Calu3 (cell line): ENCODE measurements at regions of chr6 and their contacts with region 1.

Region 1: DNA sequence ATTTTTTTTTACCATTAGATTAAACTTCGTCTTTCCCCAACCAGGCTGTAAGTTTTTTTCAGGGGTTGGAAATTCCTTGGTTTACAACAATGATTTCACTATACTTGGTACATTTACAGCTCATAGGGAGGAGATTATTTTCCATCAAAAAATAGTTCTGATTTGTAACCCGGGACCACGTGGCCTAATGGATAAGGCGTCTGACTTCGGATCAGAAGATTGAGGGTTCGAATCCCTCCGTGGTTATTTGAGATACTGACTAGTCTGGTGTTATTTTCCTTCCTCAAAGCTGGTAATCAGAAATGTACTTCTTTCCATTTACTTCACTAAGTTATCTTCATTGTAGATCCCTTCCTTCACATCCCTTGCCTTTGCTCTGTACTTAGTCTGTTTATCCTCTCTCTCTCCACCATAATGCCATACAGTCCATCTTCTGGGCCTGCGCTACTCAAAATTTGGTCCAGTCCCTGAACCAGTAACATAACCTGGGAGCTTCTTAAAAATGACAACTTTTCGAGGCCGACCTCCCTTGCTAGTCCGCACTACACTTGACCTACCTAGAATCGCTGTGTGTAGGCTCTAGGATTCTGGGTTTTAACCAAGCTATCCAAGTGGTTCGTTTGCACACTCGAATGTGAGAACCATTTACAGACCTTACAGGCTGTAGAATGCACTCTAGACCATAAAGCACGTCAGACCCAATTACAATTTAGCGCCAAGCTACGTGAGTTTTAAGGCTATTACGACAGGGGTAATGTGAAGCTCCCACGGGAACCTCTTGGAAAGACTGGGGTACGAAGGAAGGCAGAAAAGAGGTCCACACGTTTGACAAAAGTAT is 42.1 kb upstream of the BTN3A2 start:
- DNase-seq: peak; percentile 89
- H3K4me3 Mint-ChIP-seq: peak overlapping the region; percentile 76
- H3K27ac Mint-ChIP-seq: peak overlapping the region; percentile 91
- H3K4me1 Mint-ChIP-seq: peaks cover 25% of the 10 kb centered on the region
- H3K27me3 Mint-ChIP-seq: no peaks in the 10 kb centered on the region
- CTCF ChIP-seq: no peak

Region 2: GRCh38 chr6:27132532-27133280 is 809.8 kb after region 1 on chr6:
- CTCF ChIA-PET with region 1: no interaction called
- intact Hi-C with region 1: loop called (anchors 10 kb)
- DNase-seq: peak; percentile 92
- H3K4me3 Mint-ChIP-seq: no peak overlapping the region
- H3K27ac Mint-ChIP-seq: no peak overlapping the region
- H3K4me1 Mint-ChIP-seq: no peaks in the 10 kb centered on the region
- H3K27me3 Mint-ChIP-seq: no peaks in the 10 kb centered on the region
- CTCF ChIP-seq: no peak